ENCODE measurements at regions of chr4 and their contacts with region 1.

Region 1: GRCh38 chr4:82739316-82740179 is 59.0 kb downstream of the SCD5 start:
- DNase-seq: peak in 3 of 5 donors; percentile 53 to 68 (median 60)
- H3K4me3 ChIP-seq: no peak overlapping the region
- H3K27ac ChIP-seq: no peak overlapping the region
- H3K4me1 ChIP-seq: peaks cover 3% of the 10 kb centered on the region
- H3K27me3 ChIP-seq: no peaks in the 10 kb centered on the region
- CTCF ChIP-seq: peak in 2 of 3 donors; percentile 42 to 68
- EP300 ChIP-seq: no peak
- POLR2A ChIP-seq: no peak

Region 2: GRCh38 chr4:82284858-82285805 is 454.4 kb before region 1 on chr4:
- intact Hi-C with region 1: no loop called
- DNase-seq: peak; percentile 99 to 100 (median 99)
- H3K4me3 ChIP-seq: peak overlapping the region; percentile 41
- H3K27ac ChIP-seq: peak overlapping the region in 1 of 2 donors; percentile 79
- H3K4me1 ChIP-seq: peaks cover 3% of the 10 kb centered on the region
- H3K27me3 ChIP-seq: no peaks in the 10 kb centered on the region
- CTCF ChIP-seq: peak; percentile 60 to 96 (median 64)
- EP300 ChIP-seq: no peak
- POLR2A ChIP-seq: no peak

Region 3: DNA sequence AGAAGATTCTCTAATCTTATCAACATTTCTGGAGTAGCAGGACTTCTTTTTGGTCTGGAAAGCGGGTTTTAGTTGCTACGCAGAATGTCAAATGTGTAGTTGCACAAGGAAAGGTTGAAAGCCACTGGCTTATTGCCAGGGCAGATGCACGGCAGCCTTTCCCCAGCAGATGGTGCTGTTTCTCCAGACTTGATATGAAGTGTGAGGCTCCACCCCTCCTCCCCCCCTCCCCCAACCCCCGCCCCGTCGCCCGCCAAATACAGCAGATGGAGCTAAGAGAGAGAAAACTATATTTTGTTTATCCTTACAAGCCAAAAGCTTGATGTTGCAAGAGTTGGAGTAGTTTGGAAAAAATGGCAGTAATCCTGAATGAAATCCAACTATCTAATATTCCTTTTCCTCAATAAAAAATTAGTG is 277.1 kb before region 1 on chr4:
- intact Hi-C with region 1: loop called in 1 of 4 experiments (anchors 10 kb)
- DNase-seq: peak; percentile 88 to 96 (median 94)
- H3K4me3 ChIP-seq: no peak overlapping the region
- H3K27ac ChIP-seq: peak overlapping the region in 1 of 2 donors; percentile 36
- H3K4me1 ChIP-seq: no peaks in the 10 kb centered on the region
- H3K27me3 ChIP-seq: no peaks in the 10 kb centered on the region
- CTCF ChIP-seq: peak; percentile 50 to 75 (median 70)
- EP300 ChIP-seq: no peak
- POLR2A ChIP-seq: no peak